ENCODE measurements at regions of chr3 and their contacts with region 1.

Region 1: GRCh38 chr3:9986237-9986725 is 360 bp downstream of the EMC3 start:
- DNase-seq: no peak
- H3K4me3 Mint-ChIP-seq: peak overlapping the region; percentile 98
- H3K27ac Mint-ChIP-seq: peak overlapping the region; percentile 96
- H3K4me1 Mint-ChIP-seq: peaks cover 40% of the 10 kb centered on the region
- H3K27me3 Mint-ChIP-seq: no peaks in the 10 kb centered on the region

Region 2: GRCh38 chr3:9946112-9947024 is 39.9 kb before region 1 on chr3:
- CTCF ChIA-PET with region 1: interaction called, 10 read pairs
- POLR2A ChIA-PET with region 1: interaction called, 9 read pairs
- DNase-seq: peak; percentile 85
- H3K4me3 Mint-ChIP-seq: peak overlapping the region; percentile 75
- H3K27ac Mint-ChIP-seq: peak overlapping the region; percentile 16
- H3K4me1 Mint-ChIP-seq: peaks cover 15% of the 10 kb centered on the region
- H3K27me3 Mint-ChIP-seq: no peaks in the 10 kb centered on the region

Region 3: GRCh38 chr3:10017636-10018292 is 31.5 kb after region 1 on chr3:
- CTCF ChIA-PET with region 1: interaction called, 6 read pairs
- POLR2A ChIA-PET with region 1: interaction called, 11 read pairs
- DNase-seq: peak; percentile 65
- H3K4me3 Mint-ChIP-seq: no peak overlapping the region
- H3K27ac Mint-ChIP-seq: no peak overlapping the region
- H3K4me1 Mint-ChIP-seq: peaks cover 20% of the 10 kb centered on the region
- H3K27me3 Mint-ChIP-seq: no peaks in the 10 kb centered on the region

Region 4: DNA sequence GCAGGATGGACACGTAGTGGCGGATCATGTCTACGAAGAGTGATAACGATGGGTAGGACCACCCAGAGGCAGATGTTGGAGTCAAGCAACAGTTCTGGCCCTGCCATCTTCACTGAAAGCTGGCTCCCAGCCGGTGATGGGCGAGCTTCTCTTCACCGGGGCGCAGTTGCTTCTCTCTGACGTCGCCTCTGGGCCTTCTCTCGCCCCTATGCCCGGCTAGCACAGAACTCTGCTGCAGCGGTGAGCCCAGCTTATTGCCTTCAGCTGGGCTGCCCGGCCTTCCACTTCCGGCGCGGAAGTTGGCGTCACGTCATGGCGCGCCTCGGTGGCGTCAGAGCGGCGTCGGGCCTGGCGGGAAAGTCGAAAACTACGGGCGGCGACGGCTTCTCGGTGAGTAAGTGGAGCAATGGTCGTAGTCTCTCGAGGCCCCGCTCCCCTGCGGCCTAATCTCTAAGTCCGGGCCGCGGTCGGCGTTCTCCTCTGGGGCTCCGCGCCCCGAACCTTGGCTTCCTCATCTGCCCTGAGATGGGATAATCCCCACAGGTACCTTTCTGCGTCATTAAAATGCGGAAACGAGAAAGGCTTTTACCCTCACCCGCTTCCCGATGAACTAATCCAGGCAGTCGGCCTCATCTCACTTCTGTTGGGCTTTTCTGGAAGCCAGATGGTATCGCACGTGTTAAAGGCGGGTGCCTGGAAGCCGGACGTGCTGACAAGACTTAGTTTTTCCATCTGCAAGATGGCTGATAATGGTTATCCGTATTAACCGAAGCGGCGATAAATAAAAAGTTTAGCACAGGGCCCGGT is 40.0 kb after region 1 on chr3 and contains the start of gene FANCD2:
- CTCF ChIA-PET with region 1: interaction called, 6 read pairs
- POLR2A ChIA-PET with region 1: interaction called, 16 read pairs
- DNase-seq: peak; percentile 94
- H3K4me3 Mint-ChIP-seq: peak within 1 kb of the TSS; percentile 95
- H3K27ac Mint-ChIP-seq: peak within 1 kb of the TSS; percentile 93
- H3K4me1 Mint-ChIP-seq: peaks cover 53% of the 10 kb centered on the region
- H3K27me3 Mint-ChIP-seq: no peaks in the 10 kb centered on the region
- total RNA-seq, gene FANCD2: 54.3 to 60.8 TPM